Caco-2 (cell line): ENCODE measurements at regions of chr11 and their contacts with region 1.

Region 1: DNA sequence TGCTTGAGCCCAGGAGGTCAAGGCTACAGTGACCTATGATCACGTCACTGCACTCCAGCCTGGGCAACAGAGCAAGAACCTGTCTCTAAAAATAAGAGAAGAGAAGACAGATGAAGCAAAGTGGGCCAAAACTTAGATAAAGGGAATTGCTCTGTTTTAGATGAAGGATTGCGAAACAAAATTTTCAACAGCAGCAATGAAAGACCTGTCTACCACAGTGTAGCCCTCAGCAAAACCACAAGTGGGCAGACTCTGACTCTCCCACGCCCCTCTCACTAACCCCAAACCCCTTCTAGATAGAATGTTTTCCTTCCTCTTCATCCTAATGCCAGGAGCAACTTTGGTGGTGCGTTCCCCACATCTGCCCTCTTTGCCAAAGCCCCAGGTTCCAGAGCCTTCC is 105.6 kb upstream of the ALDH3B2 start:
- DNase-seq: no peak
- H3K4me3 ChIP-seq: no peak overlapping the region
- H3K4me3 Mint-ChIP-seq: no peak overlapping the region
- H3K27ac Mint-ChIP-seq: peak overlapping the region; percentile 49
- H3K4me1 ChIP-seq: peaks cover 8% of the 10 kb centered on the region
- H3K4me1 Mint-ChIP-seq: peaks cover 28% of the 10 kb centered on the region
- H3K27me3 ChIP-seq: no peaks in the 10 kb centered on the region
- H3K27me3 Mint-ChIP-seq: no peaks in the 10 kb centered on the region
- CTCF ChIP-seq: peak in 1 of 2 experiments; percentile 10

Region 2: DNA sequence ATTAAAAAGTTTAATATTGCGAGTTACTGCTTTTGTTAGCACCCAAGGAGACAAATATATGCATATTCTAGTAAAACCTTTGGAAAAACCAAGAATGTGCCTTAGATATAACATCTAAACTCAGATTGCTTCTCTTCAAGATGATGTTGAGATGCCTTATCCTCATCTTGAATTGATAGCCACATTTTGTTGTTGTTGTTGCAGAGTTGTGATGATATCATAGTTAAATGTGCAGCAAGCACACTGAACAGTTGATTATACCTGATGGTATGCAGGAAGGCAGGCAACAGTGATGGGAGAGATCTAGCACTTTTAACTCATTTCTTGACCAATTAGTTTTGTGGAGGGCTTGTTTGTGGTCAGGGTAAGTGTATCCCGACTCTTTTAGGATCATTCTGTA is 613.0 kb before region 1 on chr11:
- CTCF ChIA-PET with region 1: no interaction called
- POLR2A ChIA-PET with region 1: no interaction called
- intact Hi-C with region 1: no loop called
- DNase-seq: no peak
- H3K4me3 ChIP-seq: no peak overlapping the region
- H3K4me3 Mint-ChIP-seq: no peak overlapping the region
- H3K27ac Mint-ChIP-seq: no peak overlapping the region
- H3K4me1 ChIP-seq: no peaks in the 10 kb centered on the region
- H3K4me1 Mint-ChIP-seq: no peaks in the 10 kb centered on the region
- H3K27me3 ChIP-seq: no peaks in the 10 kb centered on the region
- H3K27me3 Mint-ChIP-seq: no peaks in the 10 kb centered on the region
- CTCF ChIP-seq: no peak

Region 3: DNA sequence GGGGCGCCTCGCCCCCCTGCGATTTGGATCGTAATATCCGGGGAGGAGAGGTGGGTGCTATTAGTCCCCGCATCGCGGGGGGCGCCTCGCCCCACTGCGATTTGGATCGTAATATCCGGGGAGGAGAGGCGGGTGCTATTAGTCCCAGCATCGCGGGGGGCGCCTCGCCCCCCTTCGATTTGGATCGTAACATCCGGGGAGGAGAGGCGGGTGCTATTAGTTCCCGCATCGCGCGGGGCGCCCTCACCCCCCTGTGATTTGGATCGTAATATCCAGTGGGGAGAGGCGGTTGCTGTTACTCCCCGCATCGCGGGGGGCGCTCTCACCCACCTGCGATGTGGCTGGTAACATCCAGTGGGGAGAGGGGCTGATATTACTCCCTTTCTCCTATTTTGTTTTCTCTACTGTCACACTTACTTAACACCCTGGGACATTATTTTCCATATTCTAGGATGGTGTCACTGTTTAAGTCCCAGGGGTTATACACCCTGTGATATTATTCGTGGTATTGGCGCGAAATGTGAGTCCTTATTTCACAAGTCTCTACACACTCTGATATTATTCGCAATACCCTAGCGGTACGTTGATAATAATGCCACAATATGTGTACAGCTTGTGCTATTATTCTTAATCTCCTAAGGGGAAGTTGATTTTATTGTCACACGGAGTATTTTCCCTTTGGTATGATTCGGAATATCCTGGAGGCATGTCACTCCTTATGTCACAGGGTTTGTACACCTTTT is 47.8 kb before region 1 on chr11:
- CTCF ChIA-PET with region 1: no interaction called
- POLR2A ChIA-PET with region 1: no interaction called
- intact Hi-C with region 1: loop called (anchors 1 kb)
- DNase-seq: no peak
- H3K4me3 ChIP-seq: no peak overlapping the region
- H3K4me3 Mint-ChIP-seq: no peak overlapping the region
- H3K27ac Mint-ChIP-seq: no peak overlapping the region
- H3K4me1 ChIP-seq: peaks cover 41% of the 10 kb centered on the region
- H3K4me1 Mint-ChIP-seq: peaks cover 54% of the 10 kb centered on the region
- H3K27me3 ChIP-seq: no peaks in the 10 kb centered on the region
- H3K27me3 Mint-ChIP-seq: no peaks in the 10 kb centered on the region
- CTCF ChIP-seq: no peak